Ascending aorta (tissue), 2 donors: ENCODE measurements at regions of chr14 and their contacts with region 1.

Region 1: DNA sequence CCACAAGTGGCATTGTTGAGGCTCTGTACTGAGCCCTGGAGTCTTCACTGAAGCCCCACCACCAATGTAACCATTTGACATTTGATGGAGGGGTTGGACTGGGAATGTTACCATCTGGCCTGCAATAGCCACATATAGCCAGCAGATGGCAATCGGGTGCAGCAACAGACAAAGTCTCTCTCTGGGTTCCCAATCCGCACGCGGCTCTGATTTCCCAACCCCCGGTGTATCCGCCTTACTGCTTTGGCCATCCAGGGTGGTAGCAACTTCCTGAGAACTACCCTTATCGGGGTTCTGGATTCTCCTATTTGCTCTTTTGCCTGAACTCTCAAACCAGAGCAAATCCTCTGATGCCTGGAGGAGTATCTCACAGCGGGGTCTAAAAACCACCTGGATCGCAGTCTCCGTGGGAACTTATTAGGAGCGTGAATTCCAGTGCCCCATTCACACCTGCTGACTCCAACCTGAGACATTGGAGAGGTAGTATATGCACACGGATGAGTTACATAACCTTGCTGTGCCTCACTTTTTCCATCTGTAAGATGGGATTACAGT is 14.2 kb downstream of the VRTN start:
- DNase-seq: peak in 1 of 2 donors; percentile 88
- H3K4me3 ChIP-seq: no peak overlapping the region
- H3K27ac ChIP-seq: no peak overlapping the region
- H3K4me1 ChIP-seq: no peaks in the 10 kb centered on the region
- H3K27me3 ChIP-seq: no peaks in the 10 kb centered on the region
- CTCF ChIP-seq: peak; percentile 93 to 95 (median 94)

Region 2: DNA sequence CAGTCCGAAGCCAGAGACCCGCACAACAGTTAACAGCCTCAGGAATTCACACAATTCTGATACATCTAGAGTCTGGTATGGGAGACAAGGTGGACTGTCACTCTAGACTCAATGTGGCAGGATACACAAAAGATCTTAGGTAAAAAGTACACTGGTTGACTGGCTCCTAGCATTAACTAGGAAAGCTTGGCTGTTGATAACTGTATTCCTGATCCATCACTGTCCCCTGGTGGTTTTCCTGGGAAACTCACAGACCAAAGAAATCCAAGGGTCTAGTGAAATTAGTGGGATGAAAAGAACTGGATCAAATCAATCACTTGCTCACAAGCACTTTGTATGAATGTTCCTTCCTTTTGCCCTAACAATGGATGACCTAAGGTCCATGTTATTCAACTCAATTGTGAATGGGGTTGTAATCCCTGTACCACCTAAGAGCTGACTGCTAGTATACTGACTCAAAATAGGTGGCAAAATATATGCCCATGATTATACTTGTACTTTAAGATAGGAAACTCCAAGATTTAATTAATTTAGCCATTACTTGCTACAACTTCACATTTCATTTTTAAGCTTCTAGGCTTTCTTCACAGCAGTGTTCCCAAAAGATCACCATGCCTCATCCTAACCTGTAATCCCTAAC is 116.7 kb after region 1 on chr14:
- intact Hi-C with region 1: loop called (anchors 1 kb)
- DNase-seq: no peak
- H3K4me3 ChIP-seq: no peak overlapping the region
- H3K27ac ChIP-seq: no peak overlapping the region
- H3K4me1 ChIP-seq: peaks cover 4 to 12% of the 10 kb centered on the region in 2 donors
- H3K27me3 ChIP-seq: no peaks in the 10 kb centered on the region
- CTCF ChIP-seq: peak; percentile 37 to 68 (median 63)

Region 3: DNA sequence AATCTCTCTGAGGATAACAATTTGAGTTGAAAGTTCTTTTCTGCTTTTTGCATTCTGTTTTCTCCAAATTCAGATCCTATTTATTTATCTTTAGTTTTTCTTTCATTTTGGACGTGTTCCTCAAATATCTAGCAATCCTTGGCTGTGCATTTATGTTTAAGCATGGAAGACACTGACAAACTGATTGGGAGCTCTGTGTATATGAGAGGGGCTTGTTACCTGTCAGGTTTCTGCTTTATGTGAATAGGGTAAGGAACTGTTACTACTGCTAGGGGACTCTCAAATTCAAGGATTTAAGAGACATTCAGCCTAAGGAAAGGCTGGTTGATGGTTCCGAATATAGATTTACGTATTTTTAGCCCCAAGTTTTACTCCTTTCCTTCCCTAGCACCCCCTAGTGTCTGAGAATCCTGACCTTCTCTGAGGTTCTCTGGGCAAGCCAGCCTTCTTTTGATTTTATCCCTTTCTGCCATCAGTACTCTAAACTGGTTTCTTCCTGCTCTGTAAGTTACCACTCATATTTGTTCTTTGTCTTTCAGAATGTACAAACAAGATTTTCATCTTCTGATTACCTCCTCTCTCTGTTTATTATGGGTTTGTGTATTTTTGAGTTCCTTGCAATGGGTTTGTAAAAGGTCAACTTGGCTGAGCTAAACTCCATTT is 431.2 kb after region 1 on chr14:
- intact Hi-C with region 1: loop called (anchors 10 kb)
- DNase-seq: no peak
- H3K4me3 ChIP-seq: no peak overlapping the region
- H3K27ac ChIP-seq: no peak overlapping the region
- H3K4me1 ChIP-seq: peaks cover 0 to 6% of the 10 kb centered on the region in 2 donors
- H3K27me3 ChIP-seq: no peaks in the 10 kb centered on the region
- CTCF ChIP-seq: peak in 2 of 3 experiments; percentile 24 to 46